SK-N-SH (cell line): ENCODE measurements at regions of chr11 and their contacts with region 1.

Region 1: GRCh38 chr11:44133335-44133946 is 38.0 kb downstream of the EXT2 start:
- DNase-seq: peak; percentile 43
- H3K4me3 ChIP-seq: no peak overlapping the region
- H3K27ac ChIP-seq: no peak overlapping the region
- H3K4me1 ChIP-seq: peaks cover 7 to 23% of the 10 kb centered on the region in 2 experiments; a peak in 2 of 4 replicates
- H3K27me3 ChIP-seq: no peaks in the 10 kb centered on the region
- CTCF ChIP-seq: peak; percentile 80
- EP300 ChIP-seq: no peak
- RAD21 ChIP-seq: peak; percentile 82

Region 2: GRCh38 chr11:44104481-44105294 is 28.8 kb before region 1 on chr11:
- CTCF ChIA-PET with region 1: interaction called, 27 read pairs
- POLR2A ChIA-PET with region 1: no interaction called
- DNase-seq: no peak
- H3K4me3 ChIP-seq: no peak overlapping the region
- H3K27ac ChIP-seq: no peak overlapping the region
- H3K4me1 ChIP-seq: no peaks in the 10 kb centered on the region; a peak in 1 of 4 replicates
- H3K27me3 ChIP-seq: no peaks in the 10 kb centered on the region
- CTCF ChIP-seq: peak; percentile 13; the same call in 1 of the 2 replicates
- EP300 ChIP-seq: no peak
- RAD21 ChIP-seq: no peak

Region 3: GRCh38 chr11:44120169-44120568 is 13.3 kb before region 1 on chr11:
- CTCF ChIA-PET with region 1: interaction called, 22 read pairs
- POLR2A ChIA-PET with region 1: no interaction called
- DNase-seq: peak; percentile 18
- H3K4me3 ChIP-seq: no peak overlapping the region
- H3K27ac ChIP-seq: no peak overlapping the region
- H3K4me1 ChIP-seq: peaks cover 0 to 2% of the 10 kb centered on the region in 2 experiments; a peak in 3 of 4 replicates
- H3K27me3 ChIP-seq: no peaks in the 10 kb centered on the region
- CTCF ChIP-seq: peak; percentile 36; the same call in 1 of the 2 replicates
- EP300 ChIP-seq: no peak
- RAD21 ChIP-seq: peak; percentile 48

Region 4: GRCh38 chr11:44150401-44150800 is 17.0 kb after region 1 on chr11:
- CTCF ChIA-PET with region 1: interaction called, 30 read pairs
- POLR2A ChIA-PET with region 1: no interaction called
- DNase-seq: no peak
- H3K4me3 ChIP-seq: no peak overlapping the region
- H3K27ac ChIP-seq: no peak overlapping the region
- H3K4me1 ChIP-seq: peaks cover 0 to 5% of the 10 kb centered on the region in 2 experiments; a peak in 1 of 4 replicates
- H3K27me3 ChIP-seq: no peaks in the 10 kb centered on the region
- CTCF ChIP-seq: no peak
- EP300 ChIP-seq: no peak
- RAD21 ChIP-seq: no peak

Region 5: GRCh38 chr11:44256673-44257291 is 123.3 kb after region 1 on chr11:
- CTCF ChIA-PET with region 1: interaction called, 10 read pairs
- POLR2A ChIA-PET with region 1: no interaction called
- DNase-seq: no peak
- H3K4me3 ChIP-seq: no peak overlapping the region
- H3K27ac ChIP-seq: no peak overlapping the region
- H3K4me1 ChIP-seq: peaks cover 0 to 9% of the 10 kb centered on the region in 2 experiments; a peak in 1 of 4 replicates
- H3K27me3 ChIP-seq: no peaks in the 10 kb centered on the region
- CTCF ChIP-seq: no peak
- EP300 ChIP-seq: no peak
- RAD21 ChIP-seq: no peak

Region 6: DNA sequence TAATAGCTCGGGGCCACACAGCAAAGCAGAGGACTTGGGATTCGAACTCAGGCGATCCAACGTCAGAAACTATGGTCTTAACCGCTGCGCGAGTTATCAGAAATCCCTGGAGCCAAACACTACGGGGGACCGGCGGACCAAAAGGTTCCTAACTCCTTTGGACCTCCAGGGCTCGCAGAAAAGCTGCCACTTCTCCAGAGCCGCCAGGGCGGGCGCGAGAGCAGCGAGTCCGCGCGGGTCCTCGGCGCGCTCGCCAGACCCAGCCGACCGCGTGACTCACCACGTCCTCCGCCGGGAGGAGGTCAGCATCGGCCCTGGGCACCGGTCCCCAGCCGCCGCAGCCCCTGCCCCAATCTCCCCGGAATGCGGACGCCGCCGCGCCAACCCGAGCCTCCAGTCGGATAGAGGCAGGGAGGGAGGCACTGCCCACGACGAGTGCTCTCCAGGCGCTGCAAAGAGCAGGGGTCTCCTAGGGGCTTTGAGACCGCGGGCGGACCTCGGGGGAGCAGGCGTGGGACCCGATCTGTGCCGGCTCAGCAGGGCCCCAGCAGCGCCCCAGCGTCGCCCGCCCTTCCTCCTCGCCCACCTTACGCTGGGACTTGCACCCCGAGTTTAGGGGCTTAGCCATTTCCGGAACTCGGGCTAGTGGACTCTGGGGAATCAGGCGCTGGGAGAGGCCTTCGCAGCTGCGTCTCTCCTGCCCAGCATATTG is 182.7 kb after region 1 on chr11:
- CTCF ChIA-PET with region 1: interaction called, 14 read pairs
- POLR2A ChIA-PET with region 1: no interaction called
- DNase-seq: peak; percentile 82
- H3K4me3 ChIP-seq: peak overlapping the region; percentile 39 to 41
- H3K27ac ChIP-seq: no peak overlapping the region
- H3K4me1 ChIP-seq: peaks cover 10 to 15% of the 10 kb centered on the region in 2 experiments; a peak in 2 of 4 replicates
- H3K27me3 ChIP-seq: peaks cover 99% of the 10 kb centered on the region
- CTCF ChIP-seq: peak; percentile 22; the same call in 1 of the 2 replicates
- EP300 ChIP-seq: no peak
- RAD21 ChIP-seq: no peak